ENCODE measurements at regions of chr1 and their contacts with region 1.

Region 1: GRCh38 chr1:9849691-9850441 is 26.1 kb upstream of the CLSTN1 start:
- DNase-seq: no peak
- ATAC-seq: no peak
- H3K4me3 ChIP-seq: no peak overlapping the region
- H3K27ac ChIP-seq: no peak overlapping the region
- H3K4me1 ChIP-seq: no peaks in the 10 kb centered on the region
- H3K27me3 ChIP-seq: no peaks in the 10 kb centered on the region
- CTCF ChIP-seq: no peak
- EP300 ChIP-seq: no peak
- POLR2A ChIP-seq: no peak
- RAD21 ChIP-seq: no peak

Region 2: DNA sequence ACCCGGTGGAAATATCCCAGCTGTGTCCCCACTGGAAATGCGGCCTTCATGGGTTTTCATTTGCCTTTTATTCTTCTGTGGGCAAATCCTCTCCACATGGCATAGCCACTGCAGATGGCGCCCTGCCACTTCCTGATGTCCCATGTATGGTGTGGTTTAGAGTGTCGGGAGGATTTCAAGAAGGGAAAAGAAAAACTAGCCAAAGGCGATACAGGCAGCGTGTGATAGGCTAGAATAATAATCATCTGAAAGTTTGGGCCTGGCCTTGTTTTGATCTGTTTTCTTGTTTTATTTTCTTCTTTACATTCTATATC is 748.5 kb after region 1 on chr1:
- CTCF ChIA-PET with region 1: no interaction called
- POLR2A ChIA-PET with region 1: no interaction called
- in situ Hi-C with region 1: no loop called
- intact Hi-C with region 1: loop called (anchors 5 kb)
- DNase-seq: no peak
- ATAC-seq: no peak
- H3K4me3 ChIP-seq: 0 out of 6 replicates have a peak overlapping the region, but pooled peaks of 1 of the 3 experiments have one; percentile 0
- H3K27ac ChIP-seq: peak overlapping the region; percentile 69
- H3K4me1 ChIP-seq: peaks cover 46% of the 10 kb centered on the region
- H3K27me3 ChIP-seq: no peaks in the 10 kb centered on the region
- CTCF ChIP-seq: no peak
- EP300 ChIP-seq: no peak
- POLR2A ChIP-seq: no peak
- RAD21 ChIP-seq: no peak